ENCODE measurements at regions of chr6 and their contacts with region 1.

Region 1: GRCh38 chr6:54273214-54273820 is 34.9 kb upstream of the TINAG start:
- DNase-seq: no peak
- H3K4me3 ChIP-seq: no peak overlapping the region
- CTCF ChIP-seq: no peak

Region 2: GRCh38 chr6:54194067-54194466 is 79.2 kb before region 1 on chr6:
- in situ Hi-C with region 1: no loop called
- DNase-seq: peak; percentile 32
- H3K4me3 ChIP-seq: no peak overlapping the region
- CTCF ChIP-seq: no peak

Region 3: GRCh38 chr6:54315656-54316055 is 42.3 kb after region 1 on chr6:
- in situ Hi-C with region 1: loop called (anchors 5 kb)
- DNase-seq: no peak
- H3K4me3 ChIP-seq: no peak overlapping the region
- CTCF ChIP-seq: no peak

Region 4: DNA sequence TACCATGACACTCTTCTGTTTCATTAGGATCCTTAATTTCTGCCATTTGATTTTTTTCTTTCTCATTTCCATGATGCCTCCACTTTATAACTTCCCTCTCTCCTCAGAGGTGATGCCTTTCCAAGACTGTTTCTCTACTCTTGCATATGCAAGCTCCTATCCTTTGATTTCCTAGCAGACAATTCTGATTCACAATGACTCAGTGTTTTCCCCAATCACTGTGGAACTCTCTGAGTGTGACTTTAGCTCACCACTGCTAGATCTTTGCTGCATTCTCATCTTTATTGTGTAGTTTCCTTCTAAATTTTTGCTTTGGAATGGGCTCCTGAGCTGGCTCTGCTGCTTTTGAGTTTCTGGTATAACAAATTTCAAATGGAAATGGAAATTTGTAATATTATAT is 219.8 kb after region 1 on chr6:
- in situ Hi-C with region 1: no loop called
- DNase-seq: peak; percentile 33
- H3K4me3 ChIP-seq: no peak overlapping the region
- CTCF ChIP-seq: no peak

Region 5: GRCh38 chr6:54646069-54646950 is 373.0 kb after region 1 on chr6:
- in situ Hi-C with region 1: no loop called
- DNase-seq: peak; percentile 72
- H3K4me3 ChIP-seq: no peak overlapping the region
- CTCF ChIP-seq: no peak

Measured in astrocyte of the cerebellum (primary cell).